Thyroid gland (tissue), 4 donors: ENCODE measurements at regions of chr12 and their contacts with region 1.

Region 1: GRCh38 chr12:99767809-99768208 is 120.3 kb downstream of the GARIN6 start:
- DNase-seq: no peak
- H3K4me3 ChIP-seq: no peak overlapping the region
- H3K27ac ChIP-seq: no peak overlapping the region
- H3K4me1 ChIP-seq: no peaks in the 10 kb centered on the region
- H3K27me3 ChIP-seq: no peaks in the 10 kb centered on the region
- CTCF ChIP-seq: peak in 3 of 6 experiments; percentile 56 to 74 (median 62)
- POLR2A ChIP-seq: no peak

Region 2: DNA sequence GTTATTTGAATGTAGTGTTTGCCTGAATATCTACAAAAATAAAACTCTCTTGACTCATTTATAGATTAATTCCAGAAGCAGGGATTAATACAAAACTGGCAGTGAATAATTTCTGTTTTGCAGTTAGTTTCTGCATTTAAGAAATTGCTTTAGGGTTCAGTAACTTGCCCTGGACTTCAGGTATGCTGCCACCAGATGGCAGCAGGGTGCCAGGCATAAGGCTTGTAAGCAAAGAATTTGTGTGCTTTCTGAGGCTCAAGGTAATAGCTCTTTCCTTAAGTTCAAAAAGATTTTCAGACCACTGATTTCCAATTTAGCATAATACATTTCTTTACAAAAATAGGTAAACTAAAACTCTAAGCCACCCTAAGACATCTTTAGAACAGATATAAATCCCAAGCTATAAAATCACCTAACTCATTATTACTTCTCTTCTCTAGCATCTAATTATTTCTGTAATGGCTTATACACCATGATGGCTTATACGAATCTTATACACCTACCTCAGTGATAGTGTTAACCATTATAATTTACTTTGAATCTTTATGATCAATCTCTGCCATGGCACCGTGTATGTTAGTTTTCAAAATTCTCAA is 724.4 kb before region 1 on chr12:
- intact Hi-C with region 1: loop called (anchors 10 kb)
- DNase-seq: peak; percentile 64 to 76
- H3K4me3 ChIP-seq: no peak overlapping the region
- H3K27ac ChIP-seq: no peak overlapping the region
- H3K4me1 ChIP-seq: no peaks in the 10 kb centered on the region
- H3K27me3 ChIP-seq: no peaks in the 10 kb centered on the region
- CTCF ChIP-seq: peak; percentile 57 to 89 (median 75)
- POLR2A ChIP-seq: no peak

Region 3: DNA sequence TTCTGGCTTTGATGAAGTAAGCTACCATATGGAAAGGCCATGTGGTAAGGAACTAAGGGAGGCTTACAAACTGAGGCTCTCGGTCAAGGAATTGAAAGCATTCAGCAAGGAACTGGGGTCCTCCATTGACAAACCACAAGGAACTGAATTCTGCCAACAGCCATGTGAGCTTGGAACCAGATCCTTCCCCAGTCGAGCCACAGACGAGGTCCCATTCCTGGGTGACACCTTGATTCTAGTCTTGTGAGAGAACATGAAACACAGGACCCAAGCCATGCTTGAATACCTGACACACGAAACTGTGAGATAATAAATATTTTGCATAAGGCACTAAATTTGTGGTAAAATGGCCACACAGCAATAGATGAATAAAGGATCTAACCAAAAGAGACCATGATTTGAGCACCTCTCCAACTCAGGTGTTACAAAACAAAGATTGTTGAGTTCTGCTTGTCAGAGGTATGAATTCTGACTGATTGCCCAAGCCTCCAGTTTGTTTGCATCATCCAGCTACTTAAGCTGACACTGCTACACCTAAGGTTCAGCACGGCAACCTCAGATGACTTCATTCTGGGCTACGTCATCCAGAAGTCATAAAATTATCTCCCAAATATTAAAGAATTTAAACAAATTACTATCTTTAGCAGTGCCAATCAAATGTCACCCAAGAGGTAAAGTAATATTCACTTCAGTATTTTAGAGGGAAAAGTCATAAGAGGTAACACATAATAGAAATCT is 60.9 kb before region 1 on chr12:
- intact Hi-C with region 1: no loop called
- DNase-seq: no peak
- H3K4me3 ChIP-seq: no peak overlapping the region
- H3K27ac ChIP-seq: no peak overlapping the region
- H3K4me1 ChIP-seq: no peaks in the 10 kb centered on the region
- H3K27me3 ChIP-seq: no peaks in the 10 kb centered on the region
- CTCF ChIP-seq: no peak
- POLR2A ChIP-seq: no peak